ENCODE measurements at regions of chr19 and their contacts with region 1.

Region 1: GRCh38 chr19:48738557-48739399 is 1.6 kb downstream of the RASIP1 start:
- DNase-seq: peak; percentile 96
- H3K4me3 Mint-ChIP-seq: peak overlapping the region; percentile 79
- H3K27ac Mint-ChIP-seq: peak overlapping the region; percentile 80
- H3K4me1 Mint-ChIP-seq: peaks cover 11% of the 10 kb centered on the region
- H3K27me3 Mint-ChIP-seq: peaks cover 5% of the 10 kb centered on the region

Region 2: GRCh38 chr19:48637948-48638830 is 100.6 kb before region 1 on chr19:
- intact Hi-C with region 1: no loop called
- DNase-seq: peak; percentile 94
- H3K4me3 Mint-ChIP-seq: peak overlapping the region; percentile 86
- H3K27ac Mint-ChIP-seq: peak overlapping the region; percentile 99
- H3K4me1 Mint-ChIP-seq: peaks cover 35% of the 10 kb centered on the region
- H3K27me3 Mint-ChIP-seq: peaks cover 2% of the 10 kb centered on the region

Region 3: GRCh38 chr19:48674921-48675824 is 63.6 kb before region 1 on chr19:
- intact Hi-C with region 1: loop called (anchors 2 kb)
- DNase-seq: peak; percentile 93
- H3K4me3 Mint-ChIP-seq: no peak overlapping the region
- H3K27ac Mint-ChIP-seq: no peak overlapping the region
- H3K4me1 Mint-ChIP-seq: peaks cover 7% of the 10 kb centered on the region
- H3K27me3 Mint-ChIP-seq: no peaks in the 10 kb centered on the region

Measured in activated CD4-positive, alpha-beta T cell treated with anti-CD3 and anti-CD28 coated beads, Interleukin-2, amount 10 ng/mL, durations not matched to agents 24 days and 14 days (primary cell).